ENCODE measurements at regions of chrX and their contacts with region 1.

Region 1: GRCh38 chrX:15242899-15243555 is 26.9 kb downstream of the ASB9 start:
- DNase-seq: peak in 6 of 9 donors; percentile 8 to 40 (median 22)
- ATAC-seq: no peak
- H3K4me3 ChIP-seq: no peak overlapping the region
- H3K4me3 Mint-ChIP-seq: no peak overlapping the region
- H3K27ac ChIP-seq: no peak overlapping the region
- H3K27ac Mint-ChIP-seq: no peak overlapping the region
- H3K4me1 ChIP-seq: no peaks in the 10 kb centered on the region
- H3K4me1 Mint-ChIP-seq: peaks cover 0 to 7% (median 0%) of the 10 kb centered on the region in 7 donors
- H3K27me3 ChIP-seq: no peaks in the 10 kb centered on the region
- H3K27me3 Mint-ChIP-seq: no peaks in the 10 kb centered on the region

Region 2: GRCh38 chrX:14039344-14039743 is 1203.7 kb before region 1 on chrX:
- CTCF ChIA-PET with region 1: interaction called, 3 read pairs
- POLR2A ChIA-PET with region 1: no interaction called
- intact Hi-C with region 1: loop called (anchors 1 to 2 kb)
- DNase-seq: peak in 7 of 9 donors; percentile 38 to 73 (median 62)
- ATAC-seq: peak; percentile 95
- H3K4me3 ChIP-seq: no peak overlapping the region
- H3K4me3 Mint-ChIP-seq: no peak overlapping the region
- H3K27ac ChIP-seq: no peak overlapping the region
- H3K27ac Mint-ChIP-seq: no peak overlapping the region
- H3K4me1 ChIP-seq: no peaks in the 10 kb centered on the region
- H3K4me1 Mint-ChIP-seq: no peaks in the 10 kb centered on the region
- H3K27me3 ChIP-seq: no peaks in the 10 kb centered on the region
- H3K27me3 Mint-ChIP-seq: peaks cover 0 to 21% (median 0%) of the 10 kb centered on the region in 5 donors

Region 3: DNA sequence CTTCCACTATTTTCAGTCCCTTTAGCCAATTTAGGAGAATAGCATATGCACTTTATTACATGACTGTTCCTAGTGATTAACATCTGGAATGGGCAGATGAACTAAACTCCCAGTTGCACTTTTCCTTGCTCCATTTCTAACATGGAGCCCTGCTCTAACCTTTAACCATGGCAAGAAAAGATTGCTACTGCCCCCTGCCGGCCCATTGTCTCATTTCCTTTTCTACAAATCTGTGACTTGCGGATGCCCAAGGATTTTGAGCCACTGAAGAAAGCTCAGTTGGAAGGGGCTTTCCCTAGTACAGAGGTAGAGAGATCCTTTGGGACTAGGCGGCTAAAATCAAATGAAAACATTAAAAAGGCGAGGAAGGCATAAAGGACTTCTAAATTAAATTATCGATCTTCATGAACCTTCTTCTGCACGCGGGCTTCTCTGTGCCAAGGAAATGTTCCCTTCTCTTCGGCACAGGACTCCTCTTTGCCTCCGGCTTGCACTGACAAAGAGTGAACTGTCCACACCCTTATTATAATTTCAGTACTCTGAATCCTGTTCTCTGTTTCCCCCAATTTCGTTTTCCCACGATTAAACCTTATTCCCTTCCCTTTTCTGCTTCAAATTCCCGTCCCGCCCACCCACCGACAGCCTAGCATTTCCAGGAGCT is 714.3 kb before region 1 on chrX:
- CTCF ChIA-PET with region 1: no interaction called
- POLR2A ChIA-PET with region 1: no interaction called
- intact Hi-C with region 1: loop called in 1 of 2 experiments (anchors 10 kb)
- DNase-seq: peak in 7 of 9 donors; percentile 2 to 34 (median 7)
- ATAC-seq: no peak
- H3K4me3 ChIP-seq: no peak overlapping the region
- H3K4me3 Mint-ChIP-seq: peak overlapping the region in 2 of 10 donors; percentile 19 to 56
- H3K27ac ChIP-seq: no peak overlapping the region
- H3K27ac Mint-ChIP-seq: no peak overlapping the region
- H3K4me1 ChIP-seq: no peaks in the 10 kb centered on the region
- H3K4me1 Mint-ChIP-seq: peaks cover 0 to 5% (median 0%) of the 10 kb centered on the region in 7 donors
- H3K27me3 ChIP-seq: no peaks in the 10 kb centered on the region
- H3K27me3 Mint-ChIP-seq: peaks cover 0 to 16% (median 4%) of the 10 kb centered on the region in 5 donors

Region 4: GRCh38 chrX:14956813-14957582 is 286.0 kb before region 1 on chrX:
- CTCF ChIA-PET with region 1: no interaction called
- POLR2A ChIA-PET with region 1: no interaction called
- intact Hi-C with region 1: no loop called
- DNase-seq: no peak
- ATAC-seq: no peak
- H3K4me3 ChIP-seq: no peak overlapping the region
- H3K4me3 Mint-ChIP-seq: no peak overlapping the region
- H3K27ac ChIP-seq: no peak overlapping the region
- H3K27ac Mint-ChIP-seq: no peak overlapping the region
- H3K4me1 ChIP-seq: no peaks in the 10 kb centered on the region
- H3K4me1 Mint-ChIP-seq: no peaks in the 10 kb centered on the region
- H3K27me3 ChIP-seq: no peaks in the 10 kb centered on the region
- H3K27me3 Mint-ChIP-seq: no peaks in the 10 kb centered on the region

Region 5: GRCh38 chrX:15107367-15107988 is 135.5 kb before region 1 on chrX:
- CTCF ChIA-PET with region 1: interaction called, 6 read pairs
- POLR2A ChIA-PET with region 1: no interaction called
- intact Hi-C with region 1: loop called (anchors 1 kb)
- DNase-seq: peak in 1 of 9 donors; percentile 2
- ATAC-seq: no peak
- H3K4me3 ChIP-seq: no peak overlapping the region
- H3K4me3 Mint-ChIP-seq: no peak overlapping the region
- H3K27ac ChIP-seq: no peak overlapping the region
- H3K27ac Mint-ChIP-seq: no peak overlapping the region
- H3K4me1 ChIP-seq: no peaks in the 10 kb centered on the region
- H3K4me1 Mint-ChIP-seq: peaks cover 0 to 17% (median 7%) of the 10 kb centered on the region in 7 donors
- H3K27me3 ChIP-seq: no peaks in the 10 kb centered on the region
- H3K27me3 Mint-ChIP-seq: peaks cover 0 to 9% (median 4%) of the 10 kb centered on the region in 5 donors

Region 6: DNA sequence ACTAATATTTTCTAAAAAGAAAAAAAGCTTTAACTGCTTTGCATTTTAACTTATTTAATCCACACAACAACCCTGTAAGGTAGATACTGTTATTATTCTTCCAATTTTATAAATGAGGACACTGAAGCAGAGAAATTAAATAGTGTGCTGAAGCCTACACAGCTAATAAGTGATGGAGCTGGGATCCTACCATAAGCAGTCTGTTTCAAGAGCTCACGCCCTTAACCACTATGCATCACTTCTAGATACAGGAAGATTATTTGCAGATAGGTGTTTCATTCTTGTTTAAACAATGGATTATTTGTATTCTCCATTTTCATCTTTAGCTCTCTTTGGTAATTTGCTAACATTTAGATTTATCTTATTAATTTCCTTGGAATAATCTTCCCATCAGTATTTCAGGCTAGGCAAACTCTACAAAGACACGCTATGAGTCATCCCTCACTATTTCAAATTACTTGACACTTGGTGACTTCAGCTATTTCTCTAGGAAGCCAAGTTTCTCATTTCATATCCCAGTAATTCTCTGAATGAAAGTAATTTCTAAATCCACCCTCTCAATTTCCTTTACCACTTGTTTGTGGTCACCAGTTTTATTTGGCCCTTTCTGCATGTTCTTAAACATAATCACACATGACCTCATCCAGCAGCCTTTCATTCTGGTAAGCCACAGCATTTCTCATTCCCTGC is 40.4 kb before region 1 on chrX:
- CTCF ChIA-PET with region 1: no interaction called
- POLR2A ChIA-PET with region 1: no interaction called
- intact Hi-C with region 1: loop called in 1 of 2 experiments (anchors 5 kb)
- DNase-seq: no peak
- ATAC-seq: no peak
- H3K4me3 ChIP-seq: no peak overlapping the region
- H3K4me3 Mint-ChIP-seq: peak overlapping the region in 1 of 10 donors; percentile 38
- H3K27ac ChIP-seq: no peak overlapping the region
- H3K27ac Mint-ChIP-seq: peak overlapping the region in 2 of 9 donors; percentile 76 to 84
- H3K4me1 ChIP-seq: peaks cover 0 to 14% of the 10 kb centered on the region in 2 donors
- H3K4me1 Mint-ChIP-seq: peaks cover 9 to 47% (median 24%) of the 10 kb centered on the region in 7 donors
- H3K27me3 ChIP-seq: no peaks in the 10 kb centered on the region
- H3K27me3 Mint-ChIP-seq: peaks cover 0 to 7% (median 0%) of the 10 kb centered on the region in 5 donors

Region 7: DNA sequence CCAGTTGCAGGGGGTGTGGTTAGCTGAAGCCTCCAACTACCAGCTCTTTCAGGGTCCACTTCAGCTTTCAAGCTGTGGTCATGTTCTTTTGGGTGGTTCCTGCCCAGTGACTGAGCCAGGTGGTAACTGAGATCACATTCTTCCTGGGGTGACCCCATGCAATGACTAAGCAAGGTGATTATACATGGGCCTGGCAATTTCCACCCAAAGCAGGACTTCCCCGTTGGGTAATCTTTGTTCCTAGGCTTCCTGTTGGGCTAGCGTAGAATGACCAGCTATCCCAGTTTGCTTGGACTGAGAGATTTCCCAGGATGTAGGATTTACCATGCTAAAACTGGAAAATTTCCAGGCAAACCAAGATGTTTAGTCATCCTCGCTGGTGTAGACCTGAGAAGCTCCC is 905.9 kb after region 1 on chrX:
- CTCF ChIA-PET with region 1: no interaction called
- POLR2A ChIA-PET with region 1: no interaction called
- intact Hi-C with region 1: no loop called
- DNase-seq: no peak
- ATAC-seq: no peak
- H3K4me3 ChIP-seq: no peak overlapping the region
- H3K4me3 Mint-ChIP-seq: no peak overlapping the region
- H3K27ac ChIP-seq: no peak overlapping the region
- H3K27ac Mint-ChIP-seq: no peak overlapping the region
- H3K4me1 ChIP-seq: no peaks in the 10 kb centered on the region
- H3K4me1 Mint-ChIP-seq: no peaks in the 10 kb centered on the region
- H3K27me3 ChIP-seq: no peaks in the 10 kb centered on the region
- H3K27me3 Mint-ChIP-seq: peaks cover 0 to 4% (median 0%) of the 10 kb centered on the region in 5 donors